Common myeloid progenitor, CD34-positive (primary cell): ENCODE measurements at regions of chr1 and their contacts with region 1.

Region 1: GRCh38 chr1:45490626-45491486 is at the start of gene TESK2:
- DNase-seq: peak; percentile 100
- H3K4me3 ChIP-seq: peak within 1 kb of the TSS; percentile 77 to 95 (median 90)
- H3K27ac ChIP-seq: peak within 1 kb of the TSS; percentile 12 to 61
- H3K4me1 ChIP-seq: peaks cover 5 to 20% (median 15%) of the 10 kb centered on the region in 4 experiments
- H3K27me3 ChIP-seq: no peaks in the 10 kb centered on the region

Region 2: DNA sequence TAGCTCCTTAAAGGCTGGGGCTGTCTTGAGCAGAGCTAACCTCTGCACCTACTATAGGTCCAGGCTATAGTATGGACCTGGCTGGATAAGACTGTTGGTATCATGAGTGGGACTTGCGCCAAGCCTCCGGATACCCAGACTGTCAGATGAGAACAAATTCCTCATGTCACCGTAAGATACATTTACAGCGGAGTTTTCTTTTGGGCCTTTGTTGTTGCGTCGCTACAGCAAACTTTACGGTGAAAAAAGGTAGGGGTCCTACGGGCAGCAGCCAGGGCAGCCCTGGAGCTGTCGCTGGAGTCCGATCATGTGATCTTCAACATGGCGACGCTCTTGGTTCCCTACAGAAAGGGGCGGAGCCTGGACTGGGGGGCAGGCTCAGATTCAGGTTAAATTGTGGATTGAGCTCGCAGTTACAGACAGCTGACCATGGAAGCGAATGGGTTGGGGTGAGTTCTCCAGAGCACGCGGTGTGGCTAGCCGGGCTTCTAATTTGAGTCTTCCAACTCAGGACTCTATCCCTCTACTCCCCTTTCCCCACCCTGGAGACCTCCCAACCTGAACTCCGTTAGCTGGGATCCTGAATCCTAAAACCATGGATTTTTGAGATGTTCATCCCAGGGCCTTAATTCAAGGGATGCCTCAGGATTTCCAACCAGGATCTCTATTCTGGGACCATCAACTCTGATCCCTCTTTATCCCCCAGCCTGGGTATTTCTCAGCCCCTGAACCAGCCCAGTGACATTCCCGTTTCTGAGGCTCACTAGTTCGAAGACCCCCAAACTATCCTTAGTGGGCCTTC is 478.8 kb before region 1 on chr1 and contains the start of gene UROD:
- CTCF ChIA-PET with region 1: interaction called, 37 read pairs
- POLR2A ChIA-PET with region 1: no interaction called
- DNase-seq: peak; percentile 96 to 98 (median 98)
- H3K4me3 ChIP-seq: peak within 1 kb of the TSS; percentile 74 to 95 (median 84)
- H3K27ac ChIP-seq: peak within 1 kb of the TSS; percentile 81 to 90
- H3K4me1 ChIP-seq: peaks cover 16 to 70% (median 51%) of the 10 kb centered on the region in 4 experiments
- H3K27me3 ChIP-seq: no peaks in the 10 kb centered on the region

Region 3: DNA sequence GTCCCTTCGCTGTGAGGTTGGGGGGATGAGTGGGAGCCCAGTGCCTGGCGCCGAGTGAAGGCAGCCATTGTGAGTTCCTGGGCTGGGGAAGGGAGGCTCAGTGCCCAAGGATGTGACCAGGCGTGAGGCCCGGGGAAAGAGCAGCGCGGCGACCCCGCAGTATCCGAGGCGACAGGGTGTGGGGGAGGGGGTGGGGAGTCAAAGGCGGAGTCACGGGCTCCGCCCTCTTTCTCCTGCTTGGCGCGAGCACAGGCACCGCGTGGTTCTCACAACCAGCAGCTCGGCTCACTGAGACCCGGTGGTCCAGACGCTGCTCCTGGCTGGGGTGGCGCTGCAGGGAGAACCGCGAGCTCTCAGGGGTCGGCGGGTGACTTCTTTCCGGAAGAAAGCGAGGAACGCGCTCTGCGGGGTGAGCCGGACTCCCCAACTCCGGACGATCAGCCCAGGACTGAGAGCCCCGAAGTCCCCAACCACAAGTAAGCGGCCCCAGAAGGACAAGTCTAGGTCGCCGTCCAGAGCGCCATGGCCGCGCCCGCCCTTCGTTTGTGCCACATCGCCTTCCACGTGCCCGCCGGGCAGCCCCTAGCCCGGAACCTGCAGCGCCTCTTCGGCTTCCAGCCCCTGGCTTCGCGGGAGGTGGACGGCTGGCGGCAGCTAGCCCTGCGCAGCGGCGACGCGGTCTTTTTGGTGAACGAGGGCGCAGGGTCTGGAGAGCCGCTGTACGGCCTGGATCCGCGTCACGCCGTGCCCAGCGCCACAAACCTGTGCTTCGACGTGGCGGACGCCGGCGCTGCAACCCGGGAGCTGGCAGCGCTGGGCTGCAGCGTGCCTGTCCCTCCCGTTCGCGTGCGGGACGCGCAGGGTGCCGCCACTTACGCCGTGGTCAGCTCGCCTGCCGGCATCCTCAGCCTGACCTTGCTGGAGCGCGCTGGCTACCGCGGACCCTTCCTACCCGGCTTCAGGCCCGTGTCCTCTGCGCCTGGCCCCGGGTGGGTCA is 163.9 kb before region 1 on chr1 and contains the start of gene HPDL:
- CTCF ChIA-PET with region 1: interaction called, 13 read pairs
- POLR2A ChIA-PET with region 1: no interaction called
- DNase-seq: peak; percentile 73 to 87 (median 87)
- H3K4me3 ChIP-seq: peak within 1 kb of the TSS; percentile 46 to 84 (median 76)
- H3K27ac ChIP-seq: no peak within 1 kb of the TSS
- H3K4me1 ChIP-seq: peaks cover 9 to 31% (median 24%) of the 10 kb centered on the region in 4 experiments
- H3K27me3 ChIP-seq: no peaks in the 10 kb centered on the region

Region 4: DNA sequence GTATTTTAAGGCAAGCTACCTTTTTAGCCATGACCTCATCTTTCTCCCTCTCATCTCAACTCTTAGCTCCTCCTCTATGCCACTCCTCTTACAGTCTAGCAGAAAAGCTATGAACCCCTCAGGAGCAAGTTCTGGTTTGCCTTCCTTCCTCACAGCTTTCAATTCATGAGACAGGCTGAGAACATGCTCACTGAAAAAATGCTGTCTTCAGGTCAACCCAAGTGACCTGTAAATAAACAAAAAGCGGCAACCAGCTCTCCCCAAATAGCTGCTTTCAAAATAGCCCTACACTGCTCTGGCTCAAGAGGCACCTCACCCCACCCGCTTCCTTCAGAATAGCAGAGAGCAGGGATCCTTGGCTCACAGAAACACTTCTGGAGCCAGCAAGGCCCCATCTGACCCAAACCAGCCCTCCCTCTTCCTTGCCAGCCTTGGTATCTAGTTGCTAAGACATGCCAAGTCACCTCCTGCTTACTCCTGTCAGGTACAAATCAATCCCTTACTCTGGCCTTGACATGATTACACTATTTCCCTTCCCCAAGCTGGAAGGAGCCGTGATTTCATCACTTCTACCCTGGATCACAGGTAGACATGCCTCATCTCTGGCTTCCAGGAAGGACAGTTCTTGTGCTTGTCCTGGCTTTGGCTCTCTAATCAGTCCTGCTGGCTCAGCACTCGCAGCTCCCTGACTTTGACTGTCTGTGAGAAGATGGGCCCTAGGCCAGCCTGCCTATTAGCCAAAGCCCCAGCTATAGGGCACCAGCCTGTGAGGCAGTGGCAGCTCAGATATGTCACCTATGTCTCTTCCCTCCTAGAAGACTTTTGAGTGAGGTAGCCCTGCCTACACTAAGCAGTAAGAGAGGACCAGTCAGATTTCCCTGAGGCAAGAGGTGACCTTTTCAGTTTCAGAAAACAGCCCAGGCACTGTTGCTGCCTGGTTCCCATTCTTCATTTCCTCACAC is 141.9 kb before region 1 on chr1:
- CTCF ChIA-PET with region 1: interaction called, 190 read pairs
- POLR2A ChIA-PET with region 1: no interaction called
- DNase-seq: no peak
- H3K4me3 ChIP-seq: no peak overlapping the region
- H3K27ac ChIP-seq: no peak overlapping the region
- H3K4me1 ChIP-seq: peaks cover 0 to 15% (median 1%) of the 10 kb centered on the region in 4 experiments
- H3K27me3 ChIP-seq: no peaks in the 10 kb centered on the region

Region 5: DNA sequence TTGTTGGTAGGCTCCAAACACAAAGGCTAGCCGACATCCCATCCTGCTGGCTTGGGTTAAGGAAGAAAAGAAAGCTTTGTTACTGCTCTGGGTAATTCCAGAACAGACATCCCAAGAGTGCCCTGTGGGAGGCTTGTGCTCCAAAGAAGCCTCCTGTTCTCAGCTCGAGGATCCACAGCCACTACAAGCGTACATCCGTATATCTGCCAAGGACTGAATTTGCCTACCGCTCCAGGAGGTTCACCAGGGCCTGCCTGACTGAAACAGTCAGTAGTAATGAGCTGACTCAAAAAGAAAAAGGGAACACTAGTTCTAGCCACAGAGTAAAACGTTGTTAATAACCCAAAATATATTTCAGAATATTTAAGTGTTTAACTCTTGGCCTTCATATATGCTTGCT is 125.8 kb before region 1 on chr1:
- CTCF ChIA-PET with region 1: interaction called, 190 read pairs
- POLR2A ChIA-PET with region 1: interaction called, 3 read pairs
- DNase-seq: no peak
- H3K4me3 ChIP-seq: no peak overlapping the region
- H3K27ac ChIP-seq: no peak overlapping the region
- H3K4me1 ChIP-seq: peaks cover 0 to 12% (median 2%) of the 10 kb centered on the region in 4 experiments
- H3K27me3 ChIP-seq: no peaks in the 10 kb centered on the region

Region 6: GRCh38 chr1:45640293-45640692 is 149.4 kb after region 1 on chr1:
- CTCF ChIA-PET with region 1: no interaction called
- POLR2A ChIA-PET with region 1: no interaction called
- DNase-seq: no peak
- H3K4me3 ChIP-seq: no peak overlapping the region
- H3K27ac ChIP-seq: no peak overlapping the region
- H3K4me1 ChIP-seq: no peaks in the 10 kb centered on the region
- H3K27me3 ChIP-seq: no peaks in the 10 kb centered on the region